GM12878 (cell line): ENCODE measurements at regions of chr6 and their contacts with region 1.

Region 1: DNA sequence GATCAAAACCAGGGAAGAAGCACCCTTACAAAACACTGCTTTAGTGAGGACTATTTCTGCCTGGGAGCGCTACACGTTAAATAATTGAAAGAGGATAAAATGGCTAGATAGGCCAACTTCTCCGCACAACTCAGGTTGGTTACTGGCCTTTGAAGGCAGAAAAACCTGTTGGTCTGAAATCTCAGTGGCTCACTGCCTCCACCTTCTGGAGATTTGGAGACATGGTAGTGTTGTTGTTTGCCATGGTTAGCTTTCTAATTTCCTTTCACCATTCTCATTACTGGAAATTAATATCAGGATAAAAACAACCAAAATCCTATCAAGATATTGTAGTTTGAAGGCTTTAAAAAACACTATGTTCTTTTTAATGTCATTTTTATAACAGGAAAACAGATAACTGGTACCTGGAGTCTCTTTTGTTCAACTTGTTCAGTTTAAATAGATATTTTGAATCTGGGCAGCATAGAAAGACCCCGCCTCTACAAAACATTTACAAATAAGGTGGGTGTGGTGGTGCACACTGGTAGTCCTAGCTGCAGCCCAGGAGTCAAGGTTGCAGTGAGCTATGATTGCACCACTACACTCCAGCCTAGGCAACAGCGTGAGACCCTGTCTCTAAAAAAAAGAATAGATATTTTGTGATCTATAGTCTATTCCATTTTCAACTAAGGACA is 27.5 kb upstream of the BCLAF1 start:
- DNase-seq: peak; percentile 4
- ATAC-seq: peak; percentile 90
- H3K4me3 ChIP-seq: no peak overlapping the region
- H3K27ac ChIP-seq: no peak overlapping the region
- H3K4me1 ChIP-seq: no peaks in the 10 kb centered on the region
- H3K27me3 ChIP-seq: no peaks in the 10 kb centered on the region
- CTCF ChIP-seq: peak; percentile 67 to 78 (median 73); a peak in 5 of 6 replicates
- EP300 ChIP-seq: no peak
- POLR2A ChIP-seq: no peak
- RAD21 ChIP-seq: peak; percentile 89

Region 2: DNA sequence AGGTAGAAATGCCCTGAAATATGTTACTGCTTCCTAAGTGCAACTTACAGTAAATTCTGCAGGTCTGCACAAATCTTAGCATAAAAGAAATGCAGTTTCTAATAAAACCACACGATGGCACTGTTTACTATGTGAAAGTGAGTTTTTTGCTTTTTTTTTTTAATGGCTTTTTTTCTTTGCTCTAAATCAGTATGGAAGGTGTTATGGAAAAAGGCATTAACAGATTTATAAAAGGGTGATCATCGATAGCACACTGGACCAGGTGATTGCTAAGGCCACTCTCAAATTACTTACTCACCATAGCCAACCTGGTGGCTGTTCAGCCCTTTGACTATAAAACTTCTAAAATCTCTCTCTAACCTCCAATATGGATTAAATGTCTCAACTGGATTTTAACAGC is 865.5 kb before region 1 on chr6:
- CTCF ChIA-PET with region 1: interaction called, 6 read pairs
- POLR2A ChIA-PET with region 1: no interaction called
- RAD21 ChIA-PET with region 1: no interaction called
- SMC1A ChIA-PET with region 1: interaction called, 5 read pairs
- in situ Hi-C with region 1: no loop called
- intact Hi-C with region 1: loop called (anchors 10 kb)
- DNase-seq: no peak
- ATAC-seq: peak; percentile 34; the same call in 2 of the 3 replicates
- H3K4me3 ChIP-seq: no peak overlapping the region
- H3K27ac ChIP-seq: no peak overlapping the region
- H3K4me1 ChIP-seq: no peaks in the 10 kb centered on the region; the same call in 1 of the 2 replicates
- H3K27me3 ChIP-seq: no peaks in the 10 kb centered on the region
- CTCF ChIP-seq: peak; percentile 49 to 67 (median 58)
- EP300 ChIP-seq: no peak
- POLR2A ChIP-seq: no peak
- RAD21 ChIP-seq: peak; percentile 77

Region 3: DNA sequence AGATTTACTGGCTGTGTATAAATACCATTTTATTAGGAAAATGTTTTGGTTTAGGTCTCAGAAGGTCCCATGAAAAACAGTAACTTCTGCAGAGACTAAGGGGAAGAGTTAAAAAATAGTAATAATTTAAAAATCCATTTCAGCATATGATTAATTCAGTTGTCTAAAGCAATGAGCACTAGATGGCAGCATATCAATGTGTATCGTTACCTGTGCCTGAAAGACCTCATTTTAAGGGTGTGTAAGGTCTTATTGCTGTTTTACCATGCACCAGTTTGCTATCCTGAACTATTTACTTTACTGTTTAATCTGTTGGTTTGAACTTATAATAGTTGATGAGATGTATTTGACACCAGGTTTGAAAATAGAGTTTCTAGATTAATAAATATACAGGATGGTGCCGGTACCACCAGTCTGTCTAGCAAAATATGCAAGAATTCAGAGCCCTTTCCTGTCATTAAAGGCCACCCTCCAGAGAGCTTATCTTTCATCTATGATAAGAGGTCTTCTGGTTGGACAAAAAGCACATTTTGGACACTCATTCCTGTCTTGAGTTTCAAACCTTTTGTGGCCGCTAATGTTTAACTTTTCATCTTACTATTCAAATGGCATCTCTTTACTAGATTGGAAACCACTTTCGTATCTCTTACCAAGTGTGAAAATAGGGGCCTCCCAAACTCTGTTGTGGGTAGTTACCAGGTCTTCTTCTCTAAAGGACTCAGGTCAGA is 810.7 kb before region 1 on chr6:
- CTCF ChIA-PET with region 1: no interaction called
- POLR2A ChIA-PET with region 1: no interaction called
- RAD21 ChIA-PET with region 1: no interaction called
- SMC1A ChIA-PET with region 1: no interaction called
- in situ Hi-C with region 1: no loop called
- intact Hi-C with region 1: loop called (anchors 5 kb)
- DNase-seq: no peak
- ATAC-seq: peak; percentile 96
- H3K4me3 ChIP-seq: no peak overlapping the region
- H3K27ac ChIP-seq: no peak overlapping the region
- H3K4me1 ChIP-seq: no peaks in the 10 kb centered on the region
- H3K27me3 ChIP-seq: no peaks in the 10 kb centered on the region
- CTCF ChIP-seq: peak; percentile 40 to 61 (median 50); a peak in 5 of 6 replicates
- EP300 ChIP-seq: no peak
- POLR2A ChIP-seq: no peak
- RAD21 ChIP-seq: peak; percentile 74

Region 4: GRCh38 chr6:136031982-136032381 is 285.2 kb before region 1 on chr6:
- CTCF ChIA-PET with region 1: interaction called, 4 read pairs
- POLR2A ChIA-PET with region 1: no interaction called
- RAD21 ChIA-PET with region 1: no interaction called
- SMC1A ChIA-PET with region 1: no interaction called
- in situ Hi-C with region 1: no loop called
- intact Hi-C with region 1: loop called (anchors 10 kb)
- DNase-seq: no peak
- ATAC-seq: peak; percentile 45; the same call in 1 of the 3 replicates
- H3K4me3 ChIP-seq: no peak overlapping the region
- H3K27ac ChIP-seq: no peak overlapping the region
- H3K4me1 ChIP-seq: no peaks in the 10 kb centered on the region
- H3K27me3 ChIP-seq: no peaks in the 10 kb centered on the region
- CTCF ChIP-seq: peak; percentile 24 to 38 (median 27); a peak in 4 of 6 replicates
- EP300 ChIP-seq: no peak
- POLR2A ChIP-seq: no peak
- RAD21 ChIP-seq: 0 out of 2 replicates have a peak, but pooled peaks have one; percentile 11

Region 5: DNA sequence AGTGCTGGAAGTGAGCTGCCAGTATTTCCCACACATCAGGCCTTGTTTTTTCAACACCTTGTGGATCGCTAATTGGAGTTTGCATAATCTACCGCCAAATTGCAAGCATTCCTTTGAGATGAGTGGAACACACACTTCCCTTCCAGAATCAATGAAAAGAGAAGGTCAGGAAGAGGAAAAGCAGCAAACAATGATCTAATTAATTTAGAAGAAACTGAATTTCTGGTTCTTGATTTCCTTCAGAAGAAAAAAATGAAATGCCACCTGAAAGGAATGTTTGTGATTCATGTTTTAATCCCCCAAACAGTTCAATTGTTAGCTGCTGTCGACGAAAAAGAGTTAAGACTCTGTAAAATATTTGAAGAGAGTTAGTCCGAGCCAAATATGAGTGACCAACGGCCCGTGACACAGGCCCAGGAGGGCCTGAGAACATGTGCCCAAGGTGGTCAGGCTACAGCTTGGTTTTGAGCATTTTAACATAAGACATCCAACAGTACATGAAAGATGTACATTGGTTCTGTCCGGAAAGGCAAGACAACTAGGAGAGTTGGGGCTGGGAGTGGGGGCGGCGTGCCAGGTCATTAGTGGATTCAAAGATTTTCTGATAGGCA is 249.3 kb before region 1 on chr6:
- CTCF ChIA-PET with region 1: no interaction called
- POLR2A ChIA-PET with region 1: no interaction called
- RAD21 ChIA-PET with region 1: no interaction called
- SMC1A ChIA-PET with region 1: no interaction called
- in situ Hi-C with region 1: no loop called
- intact Hi-C with region 1: no loop called
- DNase-seq: no peak
- ATAC-seq: no peak
- H3K4me3 ChIP-seq: no peak overlapping the region
- H3K27ac ChIP-seq: no peak overlapping the region
- H3K4me1 ChIP-seq: no peaks in the 10 kb centered on the region
- H3K27me3 ChIP-seq: no peaks in the 10 kb centered on the region
- CTCF ChIP-seq: no peak
- EP300 ChIP-seq: no peak
- POLR2A ChIP-seq: no peak
- RAD21 ChIP-seq: no peak

Region 6: GRCh38 chr6:136137008-136137692 is 180.0 kb before region 1 on chr6:
- CTCF ChIA-PET with region 1: no interaction called
- POLR2A ChIA-PET with region 1: no interaction called
- RAD21 ChIA-PET with region 1: no interaction called
- SMC1A ChIA-PET with region 1: no interaction called
- in situ Hi-C with region 1: no loop called
- intact Hi-C with region 1: no loop called
- DNase-seq: no peak
- ATAC-seq: no peak
- H3K4me3 ChIP-seq: no peak overlapping the region
- H3K27ac ChIP-seq: no peak overlapping the region
- H3K4me1 ChIP-seq: no peaks in the 10 kb centered on the region
- H3K27me3 ChIP-seq: no peaks in the 10 kb centered on the region
- CTCF ChIP-seq: no peak
- EP300 ChIP-seq: no peak
- POLR2A ChIP-seq: no peak
- RAD21 ChIP-seq: no peak

Region 7: GRCh38 chr6:136249811-136250685 is 67.1 kb before region 1 on chr6 and contains the start of gene MTFR2:
- CTCF ChIA-PET with region 1: interaction called, 20 read pairs
- POLR2A ChIA-PET with region 1: no interaction called
- RAD21 ChIA-PET with region 1: interaction called, 8 read pairs
- SMC1A ChIA-PET with region 1: interaction called, 9 read pairs
- in situ Hi-C with region 1: no loop called
- intact Hi-C with region 1: no loop called
- DNase-seq: peak; percentile 99
- ATAC-seq: peak; percentile 94
- H3K4me3 ChIP-seq: peak within 1 kb of the TSS; percentile 80
- H3K27ac ChIP-seq: peak within 1 kb of the TSS; percentile 75
- H3K4me1 ChIP-seq: no peaks in the 10 kb centered on the region
- H3K27me3 ChIP-seq: no peaks in the 10 kb centered on the region
- CTCF ChIP-seq: no peak
- EP300 ChIP-seq: peak in 1 of 2 experiments; percentile 27; a peak in 1 of 4 replicates
- POLR2A ChIP-seq: peak; percentile 90
- RAD21 ChIP-seq: no peak
- polyA plus RNA-seq, gene MTFR2: 24.6 to 26.9 TPM

Region 8: GRCh38 chr6:136282906-136283305 is 34.3 kb before region 1 on chr6:
- CTCF ChIA-PET with region 1: interaction called, 14 read pairs
- POLR2A ChIA-PET with region 1: no interaction called
- RAD21 ChIA-PET with region 1: interaction called, 3 read pairs
- SMC1A ChIA-PET with region 1: interaction called, 4 read pairs
- in situ Hi-C with region 1: no loop called
- intact Hi-C with region 1: no loop called
- DNase-seq: no peak
- ATAC-seq: peak; percentile 41
- H3K4me3 ChIP-seq: peak overlapping the region; percentile 39; the same call in 1 of the 2 replicates
- H3K27ac ChIP-seq: no peak overlapping the region
- H3K4me1 ChIP-seq: peaks cover 5% of the 10 kb centered on the region; the same call in 1 of the 2 replicates
- H3K27me3 ChIP-seq: no peaks in the 10 kb centered on the region
- CTCF ChIP-seq: no peak
- EP300 ChIP-seq: no peak
- POLR2A ChIP-seq: no peak
- RAD21 ChIP-seq: no peak